A549 (cell line): ENCODE measurements at regions of chr12 and their contacts with region 1.

Region 1: DNA sequence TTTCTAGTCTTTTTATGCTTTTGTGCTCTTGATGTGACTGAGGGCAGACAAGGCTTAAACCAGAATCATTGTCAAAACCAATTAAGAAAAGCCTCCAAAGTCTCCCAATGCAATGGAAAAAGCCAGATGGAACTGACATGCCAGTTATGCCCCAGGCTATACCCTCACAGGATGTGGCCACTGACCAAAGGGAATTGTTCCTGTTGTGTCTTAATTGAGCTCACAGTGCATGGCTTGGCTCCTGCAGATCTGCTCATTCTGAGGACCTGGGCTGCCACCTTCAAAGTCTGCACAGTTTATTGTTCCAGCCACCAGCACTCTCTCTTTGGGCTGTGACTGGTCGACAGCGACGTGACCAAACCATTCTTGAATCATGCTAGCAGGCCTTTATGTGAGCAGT is 17.1 kb upstream of the BICD1 start:
- DNase-seq: no peak
- ATAC-seq: no peak
- H3K4me3 ChIP-seq: no peak overlapping the region
- H3K27ac ChIP-seq: no peak overlapping the region
- H3K4me1 ChIP-seq: no peaks in the 10 kb centered on the region
- CTCF ChIP-seq: no peak
- EP300 ChIP-seq: no peak
- POLR2A ChIP-seq: no peak
- RAD21 ChIP-seq: no peak

Region 2: GRCh38 chr12:31897781-31898503 is 191.6 kb before region 1 on chr12:
- CTCF ChIA-PET with region 1: no interaction called
- POLR2A ChIA-PET with region 1: no interaction called
- DNase-seq: peak in 1 of 2 experiments; percentile 30
- ATAC-seq: no peak
- H3K4me3 ChIP-seq: no peak overlapping the region
- H3K27ac ChIP-seq: peak overlapping the region in 1 of 2 experiments; percentile 1; a peak in 1 of 6 replicates
- H3K4me1 ChIP-seq: peaks cover 6% of the 10 kb centered on the region; the same call in 1 of the 3 replicates
- CTCF ChIP-seq: no peak
- EP300 ChIP-seq: no peak
- POLR2A ChIP-seq: no peak
- RAD21 ChIP-seq: no peak

Region 3: GRCh38 chr12:32106517-32107358 is 17.2 kb after region 1 on chr12 and contains the start of gene BICD1:
- CTCF ChIA-PET with region 1: interaction called, 11 read pairs
- POLR2A ChIA-PET with region 1: interaction called, 3 read pairs
- DNase-seq: peak; percentile 75 to 89
- ATAC-seq: peak; percentile 95 to 96
- H3K4me3 ChIP-seq: peak within 1 kb of the TSS; percentile 94
- H3K27ac ChIP-seq: peak within 1 kb of the TSS; percentile 97 to 98
- H3K4me1 ChIP-seq: peaks cover 28% of the 10 kb centered on the region
- CTCF ChIP-seq: peak; percentile 57
- EP300 ChIP-seq: no peak; a peak in 1 of 5 replicates
- POLR2A ChIP-seq: peak; percentile 91
- RAD21 ChIP-seq: peak; percentile 7 to 62; a peak in 3 of 5 replicates
- polyA plus RNA-seq, gene BICD1: 21.7 and 24.3 TPM in 2 replicates

Region 4: DNA sequence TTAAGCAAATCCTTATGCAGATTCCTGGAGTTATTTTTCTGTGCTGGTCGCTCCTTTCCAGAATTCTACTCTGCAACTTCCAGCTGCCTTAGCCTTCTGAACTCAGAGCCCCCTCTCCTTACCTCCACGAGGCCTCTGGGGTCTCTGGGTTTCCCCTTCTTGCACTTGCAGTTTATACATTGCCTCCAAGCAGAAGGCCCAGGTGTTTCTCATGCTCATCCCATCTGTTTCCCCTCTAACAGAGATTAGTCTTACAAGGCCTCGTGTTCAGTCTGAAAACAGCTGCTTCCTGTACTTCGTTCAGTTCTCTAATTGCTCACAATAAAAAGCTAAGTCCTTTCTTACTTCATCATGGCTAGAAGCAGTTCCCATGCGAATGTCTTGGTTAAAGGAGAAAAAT is 175.4 kb after region 1 on chr12:
- CTCF ChIA-PET with region 1: no interaction called
- POLR2A ChIA-PET with region 1: no interaction called
- DNase-seq: no peak
- ATAC-seq: no peak
- H3K4me3 ChIP-seq: no peak overlapping the region
- H3K27ac ChIP-seq: no peak overlapping the region
- H3K4me1 ChIP-seq: 0 out of 3 replicates have a peak, but pooled peaks cover 9% of the 10 kb centered on the region
- CTCF ChIP-seq: no peak
- EP300 ChIP-seq: no peak
- POLR2A ChIP-seq: no peak
- RAD21 ChIP-seq: no peak

Region 5: DNA sequence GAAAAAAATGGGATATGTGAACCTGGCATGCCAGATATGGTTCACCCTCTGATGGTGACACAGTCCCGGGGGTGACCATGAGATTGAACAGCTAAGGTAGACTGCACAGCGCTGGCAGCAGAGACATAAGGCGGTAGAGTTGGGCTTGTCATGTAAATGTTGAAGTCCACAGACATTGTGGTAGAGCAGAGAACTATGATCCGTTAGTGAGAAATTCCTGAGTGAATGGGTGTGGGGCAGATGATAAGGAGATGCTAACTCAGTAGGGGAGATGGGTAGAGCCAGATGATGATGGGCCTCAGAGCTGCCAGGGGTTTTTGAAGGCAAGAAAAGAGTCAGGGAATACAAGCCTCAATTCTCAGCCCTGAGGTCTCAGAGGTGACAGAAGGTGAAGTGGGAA is 538.4 kb after region 1 on chr12:
- CTCF ChIA-PET with region 1: no interaction called
- POLR2A ChIA-PET with region 1: no interaction called
- DNase-seq: no peak
- ATAC-seq: no peak
- H3K4me3 ChIP-seq: no peak overlapping the region
- H3K27ac ChIP-seq: no peak overlapping the region
- H3K4me1 ChIP-seq: no peaks in the 10 kb centered on the region
- CTCF ChIP-seq: no peak
- EP300 ChIP-seq: no peak
- POLR2A ChIP-seq: no peak
- RAD21 ChIP-seq: no peak